Right ventricle myocardium inferior (tissue), 1 donor: ENCODE measurements at regions of chr7 and their contacts with region 1.

Region 1: DNA sequence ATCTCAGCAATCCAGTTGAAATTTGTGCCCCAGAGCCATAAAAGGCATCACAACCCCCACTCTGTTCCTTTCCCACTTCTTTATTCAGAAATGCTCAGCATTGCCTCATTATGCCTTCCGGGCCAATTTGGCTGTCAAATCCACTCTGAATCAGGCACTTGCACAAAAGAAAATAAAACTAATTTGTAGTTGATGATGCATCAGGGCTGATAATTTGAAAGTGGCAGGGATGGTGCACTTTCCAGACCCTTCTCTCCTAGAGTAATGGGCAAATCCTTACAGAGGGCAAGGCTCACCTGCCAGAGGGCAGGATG is 147.9 kb upstream of the PDE1C start:
- DNase-seq: no peak
- ATAC-seq: peak; percentile 77

Region 2: DNA sequence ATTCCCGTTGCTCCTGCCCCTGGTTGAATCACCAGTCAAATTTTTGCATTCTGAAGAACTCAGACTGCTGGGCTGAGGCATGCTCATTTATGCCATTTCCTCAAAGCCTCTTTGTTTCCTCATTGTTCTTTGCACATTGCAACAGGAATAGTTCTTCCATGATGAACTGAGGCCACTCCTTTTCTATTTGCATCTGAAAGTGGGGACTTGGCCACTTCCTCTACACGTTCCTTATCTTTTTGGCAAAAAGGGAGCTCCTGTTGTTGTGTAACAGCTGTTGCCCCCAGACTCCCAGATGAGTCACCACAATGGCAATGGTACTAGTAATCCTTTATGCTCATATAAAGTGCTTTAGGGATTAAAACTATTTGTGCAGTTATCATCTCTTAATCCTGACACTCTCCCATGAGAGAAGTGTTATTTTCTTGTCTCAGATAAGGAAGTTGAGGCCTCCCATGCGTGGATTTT is 724.4 kb before region 1 on chr7:
- intact Hi-C with region 1: no loop called
- DNase-seq: no peak
- ATAC-seq: peak; percentile 75

Region 3: DNA sequence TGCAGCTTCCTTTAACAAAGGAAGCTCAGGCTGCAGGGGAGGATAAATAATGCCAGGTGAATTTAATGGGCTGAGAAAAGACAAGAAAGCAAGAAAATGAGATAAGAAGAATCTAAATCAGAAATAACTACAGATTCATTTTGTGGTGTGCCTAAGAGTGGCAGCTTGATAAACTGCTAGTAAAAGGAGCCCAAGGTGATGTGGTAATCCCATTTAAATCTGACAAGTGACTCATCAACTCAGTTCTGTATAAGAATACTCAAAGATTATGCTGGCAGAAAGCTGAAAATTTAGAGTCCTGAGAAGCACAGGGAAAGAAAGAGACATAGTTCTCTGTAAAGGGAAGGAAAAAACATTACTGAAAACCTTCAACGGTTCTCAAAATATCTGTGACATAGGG is 38.5 kb before region 1 on chr7:
- intact Hi-C with region 1: no loop called
- DNase-seq: no peak
- ATAC-seq: no peak

Region 4: DNA sequence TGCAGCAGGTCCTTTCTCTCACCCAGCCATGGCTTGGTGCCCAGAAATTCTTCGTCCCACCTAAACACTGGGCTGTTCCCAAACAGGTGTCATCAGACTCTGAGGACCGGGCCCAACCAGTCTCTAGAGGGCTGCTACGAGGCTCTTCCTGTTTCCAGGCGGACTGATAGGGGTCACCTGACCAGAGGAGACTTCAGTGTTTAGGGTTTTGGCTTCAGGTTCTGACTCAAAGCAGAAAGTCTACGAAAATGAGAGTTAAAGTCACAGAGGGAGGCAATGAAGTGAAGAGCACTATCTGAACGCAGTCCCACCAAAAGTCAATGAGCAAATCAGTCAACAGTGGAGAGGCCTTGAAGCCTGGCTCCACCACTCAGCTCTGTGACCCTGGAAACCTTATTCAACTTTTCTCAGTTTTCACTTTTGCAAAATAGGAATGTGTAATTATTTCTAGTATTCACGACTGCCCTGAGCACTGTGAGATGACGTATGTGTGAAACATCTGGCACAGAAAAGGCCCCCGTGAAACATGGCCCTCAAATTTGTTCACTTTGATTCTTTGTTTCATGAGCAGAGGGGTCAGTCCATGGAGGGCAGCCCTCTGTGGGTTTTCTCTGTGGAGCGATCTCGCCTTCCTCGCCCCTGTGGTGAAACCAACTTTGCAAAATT is 42.0 kb after region 1 on chr7:
- intact Hi-C with region 1: no loop called
- DNase-seq: no peak
- ATAC-seq: peak; percentile 53

Region 5: GRCh38 chr7:32298408-32299132 is 80.5 kb after region 1 on chr7:
- intact Hi-C with region 1: loop called (anchors 10 kb)
- DNase-seq: peak; percentile 74
- ATAC-seq: peak; percentile 64

Region 6: GRCh38 chr7:32357535-32358277 is 139.6 kb after region 1 on chr7:
- intact Hi-C with region 1: loop called (anchors 5 kb)
- DNase-seq: no peak
- ATAC-seq: no peak